ENCODE measurements at regions of chr12 and their contacts with region 1.

Region 1: GRCh38 chr12:108271951-108272872 is 66.9 kb downstream of the CMKLR1 start:
- DNase-seq: no peak

Region 2: GRCh38 chr12:108287227-108287626 is 15.0 kb after region 1 on chr12:
- intact Hi-C with region 1: loop called in 1 of 2 experiments (anchors 1 kb)
- DNase-seq: peak; percentile 35